Testis (tissue), 5 donors: ENCODE measurements at regions of chr2 and their contacts with region 1.

Region 1: GRCh38 chr2:33015421-33016142 is 68.8 kb downstream of the LTBP1 start:
- DNase-seq: no peak
- H3K4me3 ChIP-seq: no peak overlapping the region
- H3K27ac ChIP-seq: no peak overlapping the region
- H3K4me1 ChIP-seq: no peaks in the 10 kb centered on the region
- H3K27me3 ChIP-seq: no peaks in the 10 kb centered on the region
- CTCF ChIP-seq: no peak
- POLR2A ChIP-seq: no peak

Region 2: DNA sequence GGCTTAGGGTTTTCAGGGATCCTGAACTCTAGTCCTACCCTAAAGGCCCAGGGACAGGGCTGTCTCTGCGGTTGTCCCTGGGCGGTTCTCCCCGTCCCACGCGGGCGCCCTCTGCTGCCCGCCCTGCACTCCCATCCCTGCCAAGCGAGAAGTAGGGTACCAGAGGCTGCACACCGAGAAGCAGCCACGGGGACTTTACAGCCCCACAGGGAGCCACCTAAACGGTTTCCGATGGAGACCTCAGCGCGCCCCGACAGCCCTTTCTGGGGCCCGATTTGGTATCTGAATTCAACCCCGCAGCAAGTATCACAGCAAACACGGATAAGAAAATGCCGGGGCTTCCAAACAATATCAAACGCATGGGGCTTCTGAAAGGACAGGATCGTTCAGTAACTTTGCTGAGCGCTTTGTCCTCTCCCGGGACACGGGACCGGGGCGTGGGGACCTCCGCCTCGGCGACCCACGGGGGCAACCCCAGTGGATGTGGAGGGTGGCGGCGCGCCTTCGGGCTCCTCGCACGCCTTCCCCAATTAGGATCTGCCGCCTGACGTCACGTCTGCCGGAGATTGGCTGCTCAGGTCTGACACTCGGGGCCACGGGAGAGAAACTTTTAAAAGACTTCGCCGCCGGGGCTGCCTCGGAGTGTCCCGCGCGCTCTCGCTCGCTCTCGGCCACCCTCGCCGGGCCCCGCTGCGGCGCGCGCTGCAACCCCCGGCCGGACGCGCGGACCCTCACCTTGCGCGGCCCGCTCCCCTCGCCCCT is 69.1 kb before region 1 on chr2 and contains the start of gene LTBP1:
- intact Hi-C with region 1: loop called (anchors 10 kb)
- DNase-seq: peak; percentile 81
- H3K4me3 ChIP-seq: peak within 1 kb of the TSS; percentile 69 to 72
- H3K27ac ChIP-seq: peak within 1 kb of the TSS; percentile 45 to 83
- H3K4me1 ChIP-seq: no peaks in the 10 kb centered on the region
- H3K27me3 ChIP-seq: no peaks in the 10 kb centered on the region
- CTCF ChIP-seq: peak in 2 of 3 experiments; percentile 31 to 53
- POLR2A ChIP-seq: no peak
- total RNA-seq, gene LTBP1: 39.6 to 51.5 TPM